Endothelial cell of umbilical vein (primary cell): ENCODE measurements at regions of chr2 and their contacts with region 1.

Region 1: GRCh38 chr2:63488118-63488713 is 100.1 kb downstream of the WDPCP start:
- DNase-seq: peak; percentile 48
- H3K4me3 ChIP-seq: no peak overlapping the region
- H3K27ac ChIP-seq: no peak overlapping the region
- H3K4me1 ChIP-seq: no peaks in the 10 kb centered on the region
- H3K27me3 ChIP-seq: no peaks in the 10 kb centered on the region
- CTCF ChIP-seq: peak; percentile 34 to 62
- POLR2A ChIP-seq: no peak

Region 2: GRCh38 chr2:62939735-62940491 is 548.3 kb before region 1 on chr2:
- CTCF ChIA-PET with region 1: no interaction called
- POLR2A ChIA-PET with region 1: no interaction called
- dilution Hi-C with region 1: no loop called
- intact Hi-C with region 1: loop called (anchors 5 kb)
- DNase-seq: no peak
- H3K4me3 ChIP-seq: no peak overlapping the region
- H3K27ac ChIP-seq: no peak overlapping the region
- H3K4me1 ChIP-seq: no peaks in the 10 kb centered on the region
- H3K27me3 ChIP-seq: no peaks in the 10 kb centered on the region
- CTCF ChIP-seq: no peak
- POLR2A ChIP-seq: no peak

Region 3: GRCh38 chr2:63078852-63079606 is 409.2 kb before region 1 on chr2:
- CTCF ChIA-PET with region 1: interaction called, 15 read pairs
- POLR2A ChIA-PET with region 1: no interaction called
- dilution Hi-C with region 1: no loop called
- intact Hi-C with region 1: loop called (anchors 1 kb)
- DNase-seq: peak; percentile 6
- H3K4me3 ChIP-seq: no peak overlapping the region
- H3K27ac ChIP-seq: no peak overlapping the region
- H3K4me1 ChIP-seq: no peaks in the 10 kb centered on the region
- H3K27me3 ChIP-seq: peaks cover 5 to 8% of the 10 kb centered on the region in 2 experiments
- CTCF ChIP-seq: peak; percentile 13 to 28
- POLR2A ChIP-seq: no peak

Region 4: GRCh38 chr2:63424329-63425078 is 63.7 kb before region 1 on chr2:
- CTCF ChIA-PET with region 1: interaction called, 13 read pairs
- POLR2A ChIA-PET with region 1: no interaction called
- dilution Hi-C with region 1: no loop called
- intact Hi-C with region 1: no loop called
- DNase-seq: peak; percentile 33
- H3K4me3 ChIP-seq: no peak overlapping the region
- H3K27ac ChIP-seq: no peak overlapping the region
- H3K4me1 ChIP-seq: no peaks in the 10 kb centered on the region
- H3K27me3 ChIP-seq: no peaks in the 10 kb centered on the region
- CTCF ChIP-seq: peak; percentile 55 to 56
- POLR2A ChIP-seq: no peak

Region 5: DNA sequence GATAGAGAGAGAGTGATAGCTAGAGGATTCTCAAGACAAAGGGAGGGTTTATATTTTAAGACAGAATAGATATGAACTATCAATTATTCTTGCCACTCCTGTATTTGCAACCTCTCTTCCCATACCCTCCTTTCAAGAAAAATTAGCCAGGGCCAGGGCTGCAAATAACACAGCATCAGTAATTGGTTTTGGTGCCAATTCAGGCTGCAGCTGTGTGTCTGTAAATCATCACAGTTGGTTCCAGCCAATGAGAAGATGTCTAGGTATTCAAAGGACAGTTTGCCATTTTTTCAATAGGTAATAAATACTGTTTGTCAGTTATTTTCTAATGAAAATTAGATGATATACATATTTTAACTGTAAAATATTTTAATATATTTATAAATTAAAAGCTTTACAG is 26.6 kb after region 1 on chr2:
- CTCF ChIA-PET with region 1: no interaction called
- POLR2A ChIA-PET with region 1: no interaction called
- dilution Hi-C with region 1: no loop called
- intact Hi-C with region 1: no loop called
- DNase-seq: no peak
- H3K4me3 ChIP-seq: no peak overlapping the region
- H3K27ac ChIP-seq: no peak overlapping the region
- H3K4me1 ChIP-seq: no peaks in the 10 kb centered on the region
- H3K27me3 ChIP-seq: no peaks in the 10 kb centered on the region
- CTCF ChIP-seq: no peak
- POLR2A ChIP-seq: no peak

Region 6: GRCh38 chr2:63553049-63553448 is 64.8 kb after region 1 on chr2:
- CTCF ChIA-PET with region 1: no interaction called
- POLR2A ChIA-PET with region 1: no interaction called
- dilution Hi-C with region 1: no loop called
- intact Hi-C with region 1: no loop called
- DNase-seq: peak; percentile 18
- H3K4me3 ChIP-seq: no peak overlapping the region
- H3K27ac ChIP-seq: no peak overlapping the region
- H3K4me1 ChIP-seq: no peaks in the 10 kb centered on the region
- H3K27me3 ChIP-seq: no peaks in the 10 kb centered on the region
- CTCF ChIP-seq: no peak
- POLR2A ChIP-seq: no peak

Region 7: GRCh38 chr2:63661076-63661475 is 172.9 kb after region 1 on chr2:
- CTCF ChIA-PET with region 1: no interaction called
- POLR2A ChIA-PET with region 1: no interaction called
- dilution Hi-C with region 1: no loop called
- intact Hi-C with region 1: no loop called
- DNase-seq: peak; percentile 50
- H3K4me3 ChIP-seq: no peak overlapping the region
- H3K27ac ChIP-seq: no peak overlapping the region
- H3K4me1 ChIP-seq: no peaks in the 10 kb centered on the region
- H3K27me3 ChIP-seq: no peaks in the 10 kb centered on the region
- CTCF ChIP-seq: no peak
- POLR2A ChIP-seq: no peak